Prostate gland (tissue), 2 donors: ENCODE measurements at regions of chr1 and their contacts with region 1.

Region 1: GRCh38 chr1:207797229-207797961 is 45.5 kb downstream of the CD46 start:
- DNase-seq: peak; percentile 85
- H3K4me3 ChIP-seq: no peak overlapping the region
- H3K27ac ChIP-seq: peak overlapping the region; percentile 61 to 82
- H3K4me1 ChIP-seq: peaks cover 19% of the 10 kb centered on the region
- H3K27me3 ChIP-seq: no peaks in the 10 kb centered on the region
- CTCF ChIP-seq: peak; percentile 59 to 88 (median 72)
- POLR2A ChIP-seq: no peak

Region 2: DNA sequence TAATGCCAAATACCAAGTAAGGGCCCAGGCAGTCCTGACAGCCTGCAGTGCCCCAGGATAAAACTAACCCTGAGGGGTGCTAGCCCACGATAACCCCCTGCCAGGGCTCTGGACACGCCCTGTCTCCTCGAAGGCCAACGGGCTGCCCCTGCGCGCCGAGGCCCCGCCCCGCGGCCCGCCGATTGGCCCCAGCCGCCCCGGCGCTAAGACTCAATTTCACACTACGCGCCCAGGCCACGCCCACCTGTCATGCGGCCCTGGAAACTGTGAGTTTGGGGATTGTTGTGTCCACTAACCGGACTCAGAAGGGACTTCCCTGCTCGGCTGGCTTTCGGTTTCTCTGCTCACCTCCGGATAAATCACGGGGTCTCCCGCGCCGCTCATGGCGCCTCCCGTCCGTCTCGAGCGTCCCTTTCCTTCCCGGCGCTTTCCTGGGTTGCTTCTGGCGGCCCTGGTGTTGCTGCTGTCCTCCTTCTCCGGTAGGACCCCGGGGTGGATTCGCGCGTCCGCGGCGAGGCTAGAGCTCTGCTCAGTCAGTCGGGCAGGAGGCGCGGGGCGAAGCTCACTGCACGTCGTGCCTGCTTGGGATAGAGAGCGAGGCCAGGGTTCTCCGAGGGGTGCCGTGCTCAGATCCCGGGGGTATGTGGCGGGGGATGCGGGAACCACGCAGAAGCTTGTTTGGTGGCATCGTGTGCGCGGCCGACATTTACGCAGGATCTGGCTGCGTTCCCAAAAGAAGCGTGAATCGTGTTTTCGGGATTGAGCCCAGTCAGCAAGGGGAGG is 152.4 kb before region 1 on chr1 and contains the start of gene CR1L:
- intact Hi-C with region 1: loop called (anchors 10 kb)
- DNase-seq: peak; percentile 65
- H3K4me3 ChIP-seq: peak within 1 kb of the TSS; percentile 40 to 45
- H3K27ac ChIP-seq: no peak within 1 kb of the TSS
- H3K4me1 ChIP-seq: no peaks in the 10 kb centered on the region
- H3K27me3 ChIP-seq: no peaks in the 10 kb centered on the region
- CTCF ChIP-seq: no peak
- POLR2A ChIP-seq: no peak
- total RNA-seq, gene CR1L: not detected

Region 3: DNA sequence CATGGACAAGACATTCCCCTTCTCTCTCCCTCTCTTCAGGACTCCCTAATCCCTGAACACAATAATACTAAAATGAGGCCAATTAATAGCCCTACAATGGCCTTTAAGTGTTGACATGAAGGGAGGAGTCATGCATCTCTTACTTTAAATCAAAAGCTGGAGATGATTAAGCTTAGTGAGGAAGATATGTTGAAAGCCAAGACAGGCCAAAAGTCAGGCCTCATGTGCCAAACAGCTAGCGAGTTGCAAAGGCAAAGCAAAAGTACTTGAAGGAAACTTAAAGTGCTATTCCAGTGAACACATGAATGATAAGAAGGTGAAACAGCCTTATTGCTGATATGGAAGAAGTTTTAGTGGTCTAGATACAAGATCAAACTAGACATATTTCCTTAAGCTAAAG is 95.1 kb before region 1 on chr1:
- intact Hi-C with region 1: loop called (anchors 10 kb)
- DNase-seq: no peak
- H3K4me3 ChIP-seq: no peak overlapping the region
- H3K27ac ChIP-seq: no peak overlapping the region
- H3K4me1 ChIP-seq: no peaks in the 10 kb centered on the region
- H3K27me3 ChIP-seq: no peaks in the 10 kb centered on the region
- CTCF ChIP-seq: no peak
- POLR2A ChIP-seq: no peak